GM10248 (cell line): ENCODE measurements at regions of chr1 and their contacts with region 1.

Region 1: DNA sequence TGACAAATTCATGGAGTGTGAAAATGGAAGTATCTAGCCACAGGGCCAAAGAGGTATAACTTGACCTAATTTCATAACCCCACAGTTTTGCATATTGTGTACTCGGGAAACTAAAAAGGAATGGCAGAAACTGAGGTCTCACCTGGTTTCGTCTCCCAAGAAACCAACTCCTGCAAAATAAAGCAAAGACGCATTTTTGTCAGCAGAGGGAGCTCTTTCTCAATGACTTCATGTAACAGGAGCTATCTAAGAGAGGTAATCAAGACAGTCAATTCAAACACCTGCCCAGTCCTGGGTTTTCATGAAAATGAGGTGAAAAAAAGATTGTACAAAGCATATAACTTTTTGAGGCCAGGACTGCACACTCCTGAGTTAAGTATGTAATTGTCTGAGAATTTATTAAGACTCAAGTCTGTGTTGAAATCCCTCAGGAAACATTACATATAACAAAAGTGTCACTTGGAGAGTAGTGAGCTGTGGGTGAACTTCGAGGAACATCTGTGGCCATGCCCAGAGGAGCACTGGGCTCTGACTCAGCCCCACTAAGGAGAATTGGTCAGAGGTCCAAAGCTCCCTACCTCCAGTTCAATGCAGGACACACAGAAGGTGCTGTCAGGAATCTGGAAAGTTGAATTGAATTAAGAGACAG is 17.6 kb downstream of the FCRL4 start:
- DNase-seq: peak; percentile 64
- CTCF ChIP-seq: peak; percentile 71

Region 2: GRCh38 chr1:157523774-157524493 is 56.4 kb before region 1 on chr1:
- CTCF ChIA-PET with region 1: interaction called, 12 read pairs
- POLR2A ChIA-PET with region 1: no interaction called
- DNase-seq: peak; percentile 48
- CTCF ChIP-seq: no peak

Region 3: GRCh38 chr1:157595356-157595755 is 15.1 kb after region 1 on chr1:
- CTCF ChIA-PET with region 1: interaction called, 53 read pairs
- POLR2A ChIA-PET with region 1: no interaction called
- DNase-seq: peak; percentile 63
- CTCF ChIP-seq: no peak

Region 4: DNA sequence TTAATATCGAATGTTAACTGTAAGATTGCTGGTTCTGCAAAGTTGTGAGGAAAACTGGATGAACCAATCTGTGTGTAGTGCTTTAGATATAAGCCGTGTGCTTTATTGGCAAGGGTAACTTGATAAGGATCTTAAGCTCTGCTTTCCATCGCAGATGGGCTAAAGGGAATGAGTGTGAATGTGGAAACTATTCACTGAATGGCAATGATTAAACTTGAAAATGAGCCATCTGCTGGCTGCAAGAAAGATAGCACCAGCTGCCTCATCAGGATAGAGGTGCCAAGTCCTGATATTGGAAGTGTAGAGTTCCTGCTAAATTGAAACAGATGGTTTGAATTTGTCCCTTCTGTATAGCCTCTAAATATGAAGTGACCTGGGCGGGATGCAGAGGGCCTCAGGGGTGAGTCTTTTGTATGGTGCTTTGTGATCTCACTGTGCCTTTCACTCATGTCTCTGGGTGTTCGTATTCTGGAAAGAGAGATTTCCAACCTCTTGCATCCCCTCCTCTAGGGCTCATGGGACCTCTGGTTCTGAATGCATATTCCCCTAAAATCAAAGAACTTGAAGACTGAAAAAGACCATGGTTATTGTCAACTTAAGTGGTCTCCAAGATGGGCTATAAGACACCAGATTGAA is 111.1 kb after region 1 on chr1:
- CTCF ChIA-PET with region 1: interaction called, 35 read pairs
- POLR2A ChIA-PET with region 1: no interaction called
- DNase-seq: peak; percentile 57
- CTCF ChIP-seq: peak; percentile 65

Region 5: DNA sequence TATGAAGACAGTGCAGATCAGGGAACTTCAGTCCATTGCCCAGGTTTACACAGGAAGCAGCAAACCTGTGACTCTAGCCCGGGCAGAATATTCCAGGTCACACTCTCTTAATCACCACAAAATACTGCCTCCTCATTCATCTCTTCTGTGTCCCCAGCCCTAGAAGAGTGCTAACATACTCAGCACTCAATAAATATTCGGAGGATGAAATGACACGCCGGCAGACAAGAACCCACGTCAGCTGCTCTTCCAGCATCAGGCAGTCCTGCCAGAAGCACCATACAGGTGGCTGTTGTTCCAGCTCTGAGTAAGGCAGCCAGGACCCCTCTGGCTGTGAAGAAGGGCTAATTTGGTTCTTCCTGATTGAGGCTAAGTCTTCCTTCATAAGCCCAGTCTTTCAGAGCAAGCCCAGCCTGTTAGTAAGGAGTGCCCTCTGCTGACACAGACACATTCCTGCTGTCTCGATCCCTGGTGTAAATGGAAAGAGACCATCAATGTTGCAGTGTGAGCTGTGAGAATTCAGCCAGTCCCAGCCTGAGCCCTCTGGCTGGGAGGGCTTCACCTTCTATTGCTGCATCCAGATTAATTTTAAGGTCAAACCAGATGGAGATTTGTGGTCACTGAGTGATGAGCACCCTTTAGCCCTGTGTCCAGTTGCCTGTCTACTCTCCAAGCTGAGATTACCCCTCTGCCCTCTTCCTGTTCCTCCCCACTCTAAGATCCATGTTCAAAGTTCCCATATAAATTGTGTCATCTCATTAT is 368.2 kb after region 1 on chr1:
- CTCF ChIA-PET with region 1: interaction called, 25 read pairs
- POLR2A ChIA-PET with region 1: no interaction called
- DNase-seq: peak; percentile 41
- CTCF ChIP-seq: peak; percentile 54